AG04450 (cell line): ENCODE measurements at regions of chr4 and their contacts with region 1.

Region 1: GRCh38 chr4:147866532-147867271 is 134.8 kb downstream of the ARHGAP10 start:
- DNase-seq: peak; percentile 85
- H3K4me3 ChIP-seq: no peak overlapping the region
- H3K27ac ChIP-seq: no peak overlapping the region
- H3K27me3 ChIP-seq: no peaks in the 10 kb centered on the region
- CTCF ChIP-seq: peak; percentile 99

Region 2: DNA sequence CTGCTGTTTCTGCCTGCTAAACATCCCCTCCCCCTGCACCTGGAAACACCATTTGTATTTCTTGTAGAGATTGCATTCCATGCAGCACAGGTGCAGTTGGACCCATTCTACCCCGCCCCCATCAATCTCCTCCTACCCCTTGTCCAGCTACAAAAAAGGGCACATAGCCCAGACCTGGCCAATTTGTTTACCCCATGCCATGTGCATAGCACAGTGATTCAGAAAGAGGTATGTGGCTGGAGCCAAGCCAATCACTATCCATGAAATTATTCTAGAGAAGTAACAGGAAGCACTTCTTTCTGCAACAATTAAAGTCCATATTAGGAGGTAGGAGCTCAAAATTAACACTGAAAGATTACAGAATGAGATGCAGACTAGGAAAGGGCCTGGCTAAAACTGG is 269.7 kb before region 1 on chr4:
- CTCF ChIA-PET with region 1: interaction called, 117 read pairs
- POLR2A ChIA-PET with region 1: no interaction called
- DNase-seq: peak; percentile 87
- H3K4me3 ChIP-seq: no peak overlapping the region
- H3K27ac ChIP-seq: peak overlapping the region; percentile 92
- H3K27me3 ChIP-seq: no peaks in the 10 kb centered on the region
- CTCF ChIP-seq: no peak

Region 3: DNA sequence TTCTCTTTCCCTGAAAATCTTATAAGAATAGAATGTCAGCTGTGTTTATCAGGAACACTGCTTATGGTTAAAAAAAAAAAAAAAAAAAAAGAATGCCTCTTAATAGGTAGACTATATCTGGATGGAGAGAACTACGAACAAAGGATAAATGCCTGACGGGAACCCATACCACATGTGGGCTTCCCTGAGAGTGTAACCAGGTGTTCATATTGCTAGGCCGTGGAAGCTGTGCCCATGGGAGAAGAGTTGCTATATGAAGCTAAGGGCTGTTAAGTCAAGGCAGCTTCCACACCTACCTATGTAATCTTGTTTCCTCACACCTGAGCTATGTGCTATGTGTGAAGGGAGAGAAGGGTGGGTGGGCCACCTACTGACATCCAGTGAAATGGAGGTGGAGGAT is 222.2 kb before region 1 on chr4:
- CTCF ChIA-PET with region 1: interaction called, 83 read pairs
- POLR2A ChIA-PET with region 1: interaction called, 5 read pairs
- DNase-seq: no peak
- H3K4me3 ChIP-seq: no peak overlapping the region
- H3K27ac ChIP-seq: no peak overlapping the region
- H3K27me3 ChIP-seq: no peaks in the 10 kb centered on the region
- CTCF ChIP-seq: no peak

Region 4: GRCh38 chr4:147707865-147708672 is 158.6 kb before region 1 on chr4:
- CTCF ChIA-PET with region 1: interaction called, 123 read pairs
- POLR2A ChIA-PET with region 1: no interaction called
- DNase-seq: no peak
- H3K4me3 ChIP-seq: no peak overlapping the region
- H3K27ac ChIP-seq: no peak overlapping the region
- H3K27me3 ChIP-seq: no peaks in the 10 kb centered on the region
- CTCF ChIP-seq: peak; percentile 86

Region 5: DNA sequence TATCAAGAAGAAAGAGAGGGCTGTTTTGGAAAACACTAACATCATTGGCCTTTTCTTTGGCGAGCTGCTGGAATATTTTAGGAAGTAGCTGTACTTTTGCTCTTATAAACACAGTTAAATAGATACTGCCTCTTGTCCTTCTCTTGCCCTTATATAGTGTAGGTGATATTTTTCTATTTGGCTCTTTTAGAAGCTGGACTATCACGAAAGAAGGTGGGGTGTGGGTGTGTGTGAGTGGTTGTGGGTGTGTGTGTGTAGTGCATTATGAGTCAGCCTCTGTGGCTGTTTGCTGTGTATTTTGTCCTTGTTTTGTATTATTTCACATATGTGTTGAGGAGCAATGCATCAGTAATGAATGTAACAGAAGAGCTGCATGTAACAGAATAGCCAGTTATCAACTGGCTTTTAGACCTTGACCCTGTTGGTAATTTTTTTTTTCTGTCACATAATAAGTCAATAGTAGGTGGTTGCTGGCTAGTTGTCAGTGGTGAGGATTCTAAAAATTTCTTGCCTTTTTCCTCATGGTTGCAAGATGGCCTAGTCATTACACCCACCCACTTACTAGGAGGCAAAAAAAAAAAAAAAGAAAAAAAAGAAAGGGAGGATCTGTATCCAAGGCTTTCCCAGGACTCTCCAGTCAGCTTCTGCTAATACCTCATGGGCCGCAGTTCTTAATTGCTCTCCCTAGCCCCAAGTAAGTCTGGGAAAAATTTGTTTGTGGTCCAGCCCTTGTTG is 111.0 kb before region 1 on chr4:
- CTCF ChIA-PET with region 1: interaction called, 21 read pairs
- POLR2A ChIA-PET with region 1: no interaction called
- DNase-seq: peak; percentile 38
- H3K4me3 ChIP-seq: no peak overlapping the region
- H3K27ac ChIP-seq: peak overlapping the region; percentile 68
- H3K27me3 ChIP-seq: no peaks in the 10 kb centered on the region
- CTCF ChIP-seq: no peak

Region 6: GRCh38 chr4:147853706-147854105 is 13.0 kb before region 1 on chr4:
- CTCF ChIA-PET with region 1: interaction called, 109 read pairs
- POLR2A ChIA-PET with region 1: interaction called, 3 read pairs
- DNase-seq: no peak
- H3K4me3 ChIP-seq: no peak overlapping the region
- H3K27ac ChIP-seq: no peak overlapping the region
- H3K27me3 ChIP-seq: no peaks in the 10 kb centered on the region
- CTCF ChIP-seq: no peak

Region 7: GRCh38 chr4:147969573-147970385 is 103.1 kb after region 1 on chr4:
- CTCF ChIA-PET with region 1: interaction called, 11 read pairs
- POLR2A ChIA-PET with region 1: no interaction called
- DNase-seq: no peak
- H3K4me3 ChIP-seq: no peak overlapping the region
- H3K27ac ChIP-seq: no peak overlapping the region
- H3K27me3 ChIP-seq: no peaks in the 10 kb centered on the region
- CTCF ChIP-seq: no peak

Region 8: DNA sequence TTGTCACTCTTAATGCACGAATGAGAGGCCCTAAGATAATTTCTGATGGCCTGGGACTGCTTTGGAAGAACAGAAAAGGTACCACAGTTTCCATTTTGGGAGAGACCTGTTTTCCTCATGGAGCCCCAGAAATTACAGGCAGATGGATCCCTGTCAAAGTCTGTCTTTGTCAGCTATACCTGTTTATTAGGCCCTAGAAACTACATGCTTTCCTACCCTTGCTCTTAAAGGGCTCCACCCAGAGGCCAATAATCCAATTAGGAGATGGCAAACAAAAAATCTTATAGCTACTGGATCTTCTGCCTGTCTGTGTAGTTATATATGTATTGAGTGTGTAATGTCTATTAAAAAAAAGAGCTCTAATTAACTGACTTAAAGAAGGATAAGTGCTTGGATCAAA is 434.2 kb after region 1 on chr4:
- CTCF ChIA-PET with region 1: no interaction called
- POLR2A ChIA-PET with region 1: no interaction called
- DNase-seq: no peak
- H3K4me3 ChIP-seq: no peak overlapping the region
- H3K27ac ChIP-seq: no peak overlapping the region
- H3K27me3 ChIP-seq: no peaks in the 10 kb centered on the region
- CTCF ChIP-seq: no peak

Region 9: GRCh38 chr4:148366251-148366650 is 499.5 kb after region 1 on chr4:
- CTCF ChIA-PET with region 1: no interaction called
- POLR2A ChIA-PET with region 1: no interaction called
- DNase-seq: no peak
- H3K4me3 ChIP-seq: no peak overlapping the region
- H3K27ac ChIP-seq: no peak overlapping the region
- H3K27me3 ChIP-seq: no peaks in the 10 kb centered on the region
- CTCF ChIP-seq: no peak

Region 10: DNA sequence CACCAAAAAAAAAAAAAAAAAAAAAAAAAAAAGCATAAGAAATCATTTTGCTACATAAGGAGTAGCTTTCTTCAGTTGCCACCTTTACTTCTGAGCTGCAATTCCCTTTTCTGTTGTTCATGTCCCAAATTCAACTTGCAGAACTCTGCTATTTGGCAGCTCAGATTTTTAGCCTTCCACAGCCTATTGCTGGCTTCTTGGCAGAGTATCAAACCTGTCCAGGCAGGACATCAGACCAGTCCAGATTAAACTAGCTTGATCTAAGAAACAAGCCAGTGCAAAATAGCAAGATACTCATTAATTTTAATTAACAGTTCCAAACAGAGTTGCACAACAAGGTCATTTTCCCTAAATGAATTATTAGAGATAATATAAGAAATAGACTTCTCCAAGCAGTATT is 699.1 kb after region 1 on chr4:
- CTCF ChIA-PET with region 1: no interaction called
- POLR2A ChIA-PET with region 1: no interaction called
- DNase-seq: no peak
- H3K4me3 ChIP-seq: no peak overlapping the region
- H3K27ac ChIP-seq: no peak overlapping the region
- H3K27me3 ChIP-seq: no peaks in the 10 kb centered on the region
- CTCF ChIP-seq: no peak